CD8-positive, alpha-beta T cell (primary cell): ENCODE measurements at regions of chr1 and their contacts with region 1.

Region 1: GRCh38 chr1:211382714-211383480 is 56.3 kb downstream of the TRAF5 start:
- DNase-seq: peak; percentile 45 to 87 (median 76)
- ATAC-seq: peak; percentile 89
- H3K4me3 ChIP-seq: peak overlapping the region; percentile 85 to 95
- H3K4me3 Mint-ChIP-seq: peak overlapping the region; percentile 85
- H3K27ac ChIP-seq: peak overlapping the region; percentile 93 to 95
- H3K27ac Mint-ChIP-seq: peak overlapping the region; percentile 98
- H3K4me1 ChIP-seq: peaks cover 8% of the 10 kb centered on the region
- H3K4me1 Mint-ChIP-seq: peaks cover 19% of the 10 kb centered on the region
- H3K27me3 ChIP-seq: no peaks in the 10 kb centered on the region
- H3K27me3 Mint-ChIP-seq: no peaks in the 10 kb centered on the region
- CTCF ChIP-seq: no peak

Region 2: GRCh38 chr1:211371406-211372105 is 11.3 kb before region 1 on chr1:
- CTCF ChIA-PET with region 1: no interaction called
- POLR2A ChIA-PET with region 1: no interaction called
- intact Hi-C with region 1: no loop called
- DNase-seq: no peak
- ATAC-seq: no peak
- H3K4me3 ChIP-seq: no peak overlapping the region
- H3K4me3 Mint-ChIP-seq: no peak overlapping the region
- H3K27ac ChIP-seq: no peak overlapping the region
- H3K27ac Mint-ChIP-seq: peak overlapping the region; percentile 57
- H3K4me1 ChIP-seq: no peaks in the 10 kb centered on the region
- H3K4me1 Mint-ChIP-seq: peaks cover 4% of the 10 kb centered on the region
- H3K27me3 ChIP-seq: no peaks in the 10 kb centered on the region
- H3K27me3 Mint-ChIP-seq: no peaks in the 10 kb centered on the region
- CTCF ChIP-seq: no peak

Region 3: GRCh38 chr1:211415700-211416099 is 32.8 kb after region 1 on chr1:
- CTCF ChIA-PET with region 1: interaction called, 3 read pairs
- POLR2A ChIA-PET with region 1: no interaction called
- intact Hi-C with region 1: loop called in 1 of 2 experiments (anchors 1 kb)
- DNase-seq: no peak
- ATAC-seq: no peak
- H3K4me3 ChIP-seq: no peak overlapping the region
- H3K4me3 Mint-ChIP-seq: peak overlapping the region; percentile 59
- H3K27ac ChIP-seq: no peak overlapping the region
- H3K27ac Mint-ChIP-seq: peak overlapping the region; percentile 72
- H3K4me1 ChIP-seq: peaks cover 8% of the 10 kb centered on the region
- H3K4me1 Mint-ChIP-seq: peaks cover 13% of the 10 kb centered on the region
- H3K27me3 ChIP-seq: no peaks in the 10 kb centered on the region
- H3K27me3 Mint-ChIP-seq: no peaks in the 10 kb centered on the region
- CTCF ChIP-seq: no peak